ENCODE measurements at regions of chr17 and their contacts with region 1.

Region 1: GRCh38 chr17:38485146-38485468 is 56.8 kb downstream of the ARHGAP23 start:
- DNase-seq: no peak
- H3K4me3 ChIP-seq: no peak overlapping the region
- H3K27ac ChIP-seq: peak overlapping the region; percentile 69 to 85
- H3K4me1 ChIP-seq: peaks cover 0 to 46% (median 25%) of the 10 kb centered on the region in 4 donors
- H3K27me3 ChIP-seq: no peaks in the 10 kb centered on the region
- CTCF ChIP-seq: no peak

Region 2: GRCh38 chr17:38421171-38421841 is 63.8 kb before region 1 on chr17:
- intact Hi-C with region 1: loop called (anchors 5 kb)
- DNase-seq: no peak
- H3K4me3 ChIP-seq: peak overlapping the region in 1 of 2 donors; percentile 30
- H3K27ac ChIP-seq: peak overlapping the region; percentile 72 to 78
- H3K4me1 ChIP-seq: peaks cover 0 to 62% (median 49%) of the 10 kb centered on the region in 4 donors
- H3K27me3 ChIP-seq: peaks cover 0 to 7% of the 10 kb centered on the region in 2 donors
- CTCF ChIP-seq: no peak

Region 3: GRCh38 chr17:38443356-38444031 is 41.6 kb before region 1 on chr17:
- intact Hi-C with region 1: loop called (anchors 2 kb)
- DNase-seq: no peak
- H3K4me3 ChIP-seq: no peak overlapping the region
- H3K27ac ChIP-seq: peak overlapping the region; percentile 70 to 78
- H3K4me1 ChIP-seq: peaks cover 0 to 69% (median 51%) of the 10 kb centered on the region in 4 donors
- H3K27me3 ChIP-seq: no peaks in the 10 kb centered on the region
- CTCF ChIP-seq: no peak

Measured in tibial artery (tissue), 4 donors.